MCF 10A (cell line): ENCODE measurements at regions of chr9 and their contacts with region 1.

Region 1: GRCh38 chr9:17810728-17811571 is 232.1 kb downstream of the SH3GL2 start:
- DNase-seq: peak; percentile 78
- H3K4me3 Mint-ChIP-seq: no peak overlapping the region
- H3K27ac Mint-ChIP-seq: no peak overlapping the region
- H3K4me1 Mint-ChIP-seq: no peaks in the 10 kb centered on the region
- H3K27me3 Mint-ChIP-seq: peaks cover 25% of the 10 kb centered on the region
- CTCF ChIP-seq: peak; percentile 66

Region 2: GRCh38 chr9:17519761-17520160 is 291.2 kb before region 1 on chr9:
- CTCF ChIA-PET with region 1: interaction called, 11 read pairs
- POLR2A ChIA-PET with region 1: no interaction called
- intact Hi-C with region 1: no loop called
- DNase-seq: no peak
- H3K4me3 Mint-ChIP-seq: no peak overlapping the region
- H3K27ac Mint-ChIP-seq: no peak overlapping the region
- H3K4me1 Mint-ChIP-seq: no peaks in the 10 kb centered on the region
- H3K27me3 Mint-ChIP-seq: peaks cover 24% of the 10 kb centered on the region
- CTCF ChIP-seq: no peak

Region 3: DNA sequence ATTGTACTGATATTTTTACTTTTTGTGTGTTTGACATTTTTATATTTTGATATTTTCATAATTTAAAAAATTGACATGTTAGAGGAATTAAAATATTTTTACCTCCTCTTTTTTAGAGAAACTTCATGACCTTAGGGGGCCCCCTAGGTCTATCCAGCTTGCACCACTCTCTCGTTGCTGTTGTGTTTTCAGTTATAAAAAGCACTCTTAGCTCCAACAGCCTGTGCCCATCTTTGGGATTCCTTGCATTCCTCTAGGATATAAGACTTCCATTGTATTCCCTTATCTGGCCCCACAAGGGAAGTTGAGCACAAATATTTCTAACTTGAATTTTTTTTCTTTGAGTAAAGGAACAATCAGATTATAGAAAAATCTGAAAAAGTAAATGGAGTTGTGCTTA is 13.2 kb after region 1 on chr9:
- CTCF ChIA-PET with region 1: interaction called, 20 read pairs
- POLR2A ChIA-PET with region 1: no interaction called
- intact Hi-C with region 1: no loop called
- DNase-seq: no peak
- H3K4me3 Mint-ChIP-seq: no peak overlapping the region
- H3K27ac Mint-ChIP-seq: no peak overlapping the region
- H3K4me1 Mint-ChIP-seq: no peaks in the 10 kb centered on the region
- H3K27me3 Mint-ChIP-seq: no peaks in the 10 kb centered on the region
- CTCF ChIP-seq: no peak

Region 4: DNA sequence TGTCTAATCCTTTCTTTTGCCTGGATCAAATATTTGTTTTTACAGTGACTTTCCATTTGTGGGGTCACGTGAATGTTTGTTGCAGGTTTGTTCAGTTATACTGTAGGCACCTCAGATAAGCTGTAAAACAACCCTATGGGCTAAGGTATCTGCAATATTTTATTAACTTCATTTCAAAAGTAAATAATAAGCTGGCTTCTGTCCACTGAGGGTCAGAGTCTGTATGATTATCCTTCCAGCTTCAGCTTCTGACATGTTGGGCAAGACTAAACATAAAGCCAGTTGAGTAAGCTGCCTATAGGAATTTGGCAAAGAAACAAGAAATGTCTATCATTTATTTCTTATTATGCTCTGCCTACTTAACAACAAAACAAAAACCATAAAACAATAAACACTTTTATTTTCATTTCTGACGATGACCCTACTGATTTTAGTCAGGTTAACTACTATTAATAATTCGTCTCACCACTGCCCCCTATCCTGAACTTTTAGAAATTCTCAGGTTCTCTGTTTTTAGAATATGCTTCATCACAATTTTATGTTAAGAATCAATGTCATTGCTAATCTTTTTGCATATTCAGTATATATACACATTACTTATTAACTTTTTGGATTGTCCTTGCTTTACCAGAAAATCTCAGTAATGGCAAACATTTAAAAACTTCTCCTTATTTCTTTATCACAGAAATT is 249.4 kb after region 1 on chr9:
- CTCF ChIA-PET with region 1: interaction called, 12 read pairs
- POLR2A ChIA-PET with region 1: no interaction called
- intact Hi-C with region 1: no loop called
- DNase-seq: peak; percentile 41
- H3K4me3 Mint-ChIP-seq: no peak overlapping the region
- H3K27ac Mint-ChIP-seq: no peak overlapping the region
- H3K4me1 Mint-ChIP-seq: peaks cover 6% of the 10 kb centered on the region
- H3K27me3 Mint-ChIP-seq: peaks cover 41% of the 10 kb centered on the region
- CTCF ChIP-seq: peak; percentile 13

Region 5: DNA sequence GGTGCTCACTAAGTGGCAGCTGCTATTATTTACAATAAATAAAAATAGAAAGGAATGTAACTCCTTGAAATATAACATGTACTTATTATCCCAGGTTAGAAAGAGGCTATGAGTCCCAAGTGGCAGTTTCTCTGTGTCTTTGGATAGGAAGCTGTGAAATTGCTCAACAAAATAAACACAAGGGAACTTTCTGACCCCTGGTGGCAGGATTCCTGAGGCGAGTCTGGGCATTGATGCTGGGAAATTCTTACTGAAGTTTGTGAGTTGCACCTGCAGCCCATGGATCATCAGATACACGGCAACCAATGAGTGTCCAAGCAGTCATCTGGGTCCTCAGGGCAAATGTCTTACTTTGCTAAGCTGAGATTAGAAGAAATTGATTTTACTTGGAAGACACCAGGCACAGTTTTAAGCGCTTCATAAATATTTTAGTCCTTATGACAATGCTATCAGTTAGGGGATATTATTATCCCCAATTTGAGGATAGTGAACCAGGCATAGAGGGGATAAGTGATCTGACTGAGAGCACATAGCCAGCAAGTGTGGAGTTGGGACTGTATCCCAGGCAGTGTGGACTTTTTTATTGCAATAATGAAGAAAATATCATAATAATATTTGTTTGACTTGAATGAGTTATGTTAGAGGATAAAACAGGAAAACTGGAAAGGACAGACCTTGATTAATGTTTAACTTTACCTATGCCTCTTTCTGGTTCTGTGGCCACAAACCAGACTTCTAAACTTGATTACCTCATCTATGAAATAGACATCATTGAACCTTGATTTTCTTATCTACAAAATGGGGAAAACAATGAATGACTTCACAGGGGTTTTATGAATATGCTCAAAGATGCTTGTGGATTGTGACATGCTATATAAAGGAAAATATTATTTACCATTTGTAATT is 397.5 kb after region 1 on chr9:
- CTCF ChIA-PET with region 1: interaction called, 197 read pairs
- POLR2A ChIA-PET with region 1: interaction called, 3 read pairs
- intact Hi-C with region 1: loop called (anchors 1 kb)
- DNase-seq: peak; percentile 71
- H3K4me3 Mint-ChIP-seq: no peak overlapping the region
- H3K27ac Mint-ChIP-seq: no peak overlapping the region
- H3K4me1 Mint-ChIP-seq: no peaks in the 10 kb centered on the region
- H3K27me3 Mint-ChIP-seq: peaks cover 62% of the 10 kb centered on the region
- CTCF ChIP-seq: peak; percentile 54

Region 6: DNA sequence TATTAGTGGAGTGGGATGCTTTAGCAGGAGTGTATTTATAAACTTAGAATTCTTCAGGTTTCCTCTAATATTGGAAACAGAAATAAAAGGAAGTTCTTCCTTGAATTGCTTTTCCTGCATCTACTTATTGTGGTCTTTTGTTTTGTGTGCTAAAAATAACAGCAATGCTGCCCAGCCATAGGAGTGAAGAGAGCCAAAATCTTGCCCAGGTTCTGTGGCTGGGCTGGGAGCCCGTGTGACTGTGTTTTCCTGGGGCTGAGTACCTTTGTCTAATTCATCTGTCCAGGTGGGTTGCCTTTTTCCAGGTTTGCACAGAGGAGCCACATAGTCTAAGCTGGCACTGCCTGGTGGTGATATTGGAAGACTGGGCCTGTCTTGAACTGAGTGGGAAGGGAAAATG is 483.3 kb after region 1 on chr9:
- CTCF ChIA-PET with region 1: no interaction called
- POLR2A ChIA-PET with region 1: no interaction called
- intact Hi-C with region 1: no loop called
- DNase-seq: no peak
- H3K4me3 Mint-ChIP-seq: no peak overlapping the region
- H3K27ac Mint-ChIP-seq: no peak overlapping the region
- H3K4me1 Mint-ChIP-seq: peaks cover 5% of the 10 kb centered on the region
- H3K27me3 Mint-ChIP-seq: no peaks in the 10 kb centered on the region
- CTCF ChIP-seq: no peak

Region 7: GRCh38 chr9:18824095-18824666 is 1013.2 kb after region 1 on chr9:
- CTCF ChIA-PET with region 1: no interaction called
- POLR2A ChIA-PET with region 1: no interaction called
- intact Hi-C with region 1: loop called (anchors 10 kb)
- DNase-seq: peak; percentile 45
- H3K4me3 Mint-ChIP-seq: no peak overlapping the region
- H3K27ac Mint-ChIP-seq: no peak overlapping the region
- H3K4me1 Mint-ChIP-seq: no peaks in the 10 kb centered on the region
- H3K27me3 Mint-ChIP-seq: no peaks in the 10 kb centered on the region
- CTCF ChIP-seq: peak; percentile 47

Region 8: GRCh38 chr9:19174127-19174912 is 1363.4 kb after region 1 on chr9:
- CTCF ChIA-PET with region 1: no interaction called
- POLR2A ChIA-PET with region 1: no interaction called
- intact Hi-C with region 1: loop called (anchors 5 kb)
- DNase-seq: peak; percentile 89
- H3K4me3 Mint-ChIP-seq: no peak overlapping the region
- H3K27ac Mint-ChIP-seq: no peak overlapping the region
- H3K4me1 Mint-ChIP-seq: peaks cover 7% of the 10 kb centered on the region
- H3K27me3 Mint-ChIP-seq: no peaks in the 10 kb centered on the region
- CTCF ChIP-seq: peak; percentile 56